GM12878 (cell line): ENCODE measurements at regions of chr2 and their contacts with region 1.

Region 1: GRCh38 chr2:152466980-152467676 is 132.2 kb downstream of the FMNL2 start:
- DNase-seq: peak; percentile 74
- ATAC-seq: peak; percentile 95
- H3K4me3 ChIP-seq: peak overlapping the region; percentile 33; the same call in 1 of the 2 replicates
- H3K27ac ChIP-seq: peak overlapping the region; percentile 62
- H3K4me1 ChIP-seq: peaks cover 23% of the 10 kb centered on the region
- H3K27me3 ChIP-seq: no peaks in the 10 kb centered on the region
- CTCF ChIP-seq: no peak
- EP300 ChIP-seq: peak in 1 of 2 experiments; percentile 91; a peak in 2 of 4 replicates
- POLR2A ChIP-seq: no peak
- RAD21 ChIP-seq: no peak

Region 2: GRCh38 chr2:152189622-152190495 is 277.3 kb before region 1 on chr2:
- CTCF ChIA-PET with region 1: interaction called, 10 read pairs
- POLR2A ChIA-PET with region 1: no interaction called
- RAD21 ChIA-PET with region 1: interaction called, 3 read pairs
- SMC1A ChIA-PET with region 1: interaction called, 5 read pairs
- in situ Hi-C with region 1: no loop called
- intact Hi-C with region 1: loop called (anchors 5 kb)
- DNase-seq: no peak
- ATAC-seq: peak; percentile 94
- H3K4me3 ChIP-seq: no peak overlapping the region
- H3K27ac ChIP-seq: no peak overlapping the region
- H3K4me1 ChIP-seq: no peaks in the 10 kb centered on the region
- H3K27me3 ChIP-seq: no peaks in the 10 kb centered on the region
- CTCF ChIP-seq: peak; percentile 71 to 79 (median 73)
- EP300 ChIP-seq: no peak
- POLR2A ChIP-seq: no peak
- RAD21 ChIP-seq: peak; percentile 97

Region 3: DNA sequence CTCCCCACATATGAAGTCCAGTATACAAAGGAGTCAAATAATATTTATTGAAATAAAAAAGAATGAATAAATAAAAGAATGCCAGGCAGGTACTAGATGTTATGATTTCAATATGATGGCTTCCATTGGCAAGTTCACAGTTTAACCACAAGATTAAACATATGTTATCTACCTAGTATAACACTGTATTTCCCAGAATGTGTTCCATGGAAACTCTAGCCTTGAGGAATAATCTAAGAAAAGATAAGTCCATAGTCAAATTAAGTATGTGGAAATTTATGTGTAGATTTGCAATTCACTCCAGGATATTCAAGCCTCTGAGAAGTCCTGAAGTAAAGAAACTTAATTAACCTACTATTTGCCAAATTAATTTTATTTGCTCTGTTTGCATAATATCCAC is 203.2 kb before region 1 on chr2:
- CTCF ChIA-PET with region 1: no interaction called
- POLR2A ChIA-PET with region 1: no interaction called
- RAD21 ChIA-PET with region 1: no interaction called
- SMC1A ChIA-PET with region 1: no interaction called
- in situ Hi-C with region 1: no loop called
- intact Hi-C with region 1: no loop called
- DNase-seq: no peak
- ATAC-seq: no peak
- H3K4me3 ChIP-seq: no peak overlapping the region
- H3K27ac ChIP-seq: no peak overlapping the region
- H3K4me1 ChIP-seq: no peaks in the 10 kb centered on the region
- H3K27me3 ChIP-seq: no peaks in the 10 kb centered on the region; a peak in 1 of 4 replicates
- CTCF ChIP-seq: no peak
- EP300 ChIP-seq: no peak
- POLR2A ChIP-seq: no peak
- RAD21 ChIP-seq: no peak

Region 4: GRCh38 chr2:152278526-152278925 is 188.6 kb before region 1 on chr2:
- CTCF ChIA-PET with region 1: no interaction called
- POLR2A ChIA-PET with region 1: no interaction called
- RAD21 ChIA-PET with region 1: no interaction called
- SMC1A ChIA-PET with region 1: no interaction called
- in situ Hi-C with region 1: no loop called
- intact Hi-C with region 1: no loop called
- DNase-seq: no peak
- ATAC-seq: no peak
- H3K4me3 ChIP-seq: no peak overlapping the region
- H3K27ac ChIP-seq: no peak overlapping the region
- H3K4me1 ChIP-seq: no peaks in the 10 kb centered on the region
- H3K27me3 ChIP-seq: no peaks in the 10 kb centered on the region; a peak in 1 of 4 replicates
- CTCF ChIP-seq: no peak
- EP300 ChIP-seq: no peak
- POLR2A ChIP-seq: no peak
- RAD21 ChIP-seq: no peak

Region 5: DNA sequence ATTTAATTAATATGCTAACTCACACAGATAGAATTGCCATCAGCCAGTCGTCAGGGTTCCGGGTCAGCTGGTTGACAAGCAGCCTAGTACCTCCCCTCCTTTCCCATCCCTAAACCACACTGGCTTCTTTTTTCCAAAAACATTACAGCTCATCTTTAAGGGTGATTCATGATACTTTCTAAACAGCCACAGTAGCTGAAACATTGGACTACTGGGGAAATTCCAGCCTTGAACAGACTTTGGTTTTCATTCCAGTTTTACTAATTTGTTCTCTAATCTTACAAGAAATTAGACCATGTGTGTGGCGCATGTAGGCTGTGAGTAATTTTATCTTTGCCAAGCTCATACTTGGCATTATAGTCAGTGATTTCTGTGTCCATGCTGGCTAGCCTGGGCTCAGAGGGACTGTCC is 21.3 kb before region 1 on chr2:
- CTCF ChIA-PET with region 1: interaction called, 4 read pairs
- POLR2A ChIA-PET with region 1: interaction called, 7 read pairs
- RAD21 ChIA-PET with region 1: interaction called, 17 read pairs
- SMC1A ChIA-PET with region 1: interaction called, 21 read pairs
- in situ Hi-C with region 1: no loop called
- intact Hi-C with region 1: no loop called
- DNase-seq: no peak
- ATAC-seq: peak; percentile 86
- H3K4me3 ChIP-seq: no peak overlapping the region
- H3K27ac ChIP-seq: peak overlapping the region; percentile 33
- H3K4me1 ChIP-seq: no peaks in the 10 kb centered on the region; the same call in 1 of the 2 replicates
- H3K27me3 ChIP-seq: no peaks in the 10 kb centered on the region
- CTCF ChIP-seq: no peak
- EP300 ChIP-seq: no peak
- POLR2A ChIP-seq: no peak
- RAD21 ChIP-seq: no peak

Region 6: GRCh38 chr2:152497481-152498052 is 30.4 kb after region 1 on chr2:
- CTCF ChIA-PET with region 1: interaction called, 3 read pairs
- POLR2A ChIA-PET with region 1: interaction called, 3 read pairs
- RAD21 ChIA-PET with region 1: interaction called, 7 read pairs
- SMC1A ChIA-PET with region 1: interaction called, 98 read pairs
- in situ Hi-C with region 1: no loop called
- intact Hi-C with region 1: no loop called
- DNase-seq: no peak
- ATAC-seq: peak; percentile 76
- H3K4me3 ChIP-seq: 0 out of 2 replicates have a peak overlapping the region, but pooled peaks have one; percentile 20
- H3K27ac ChIP-seq: no peak overlapping the region
- H3K4me1 ChIP-seq: peaks cover 24% of the 10 kb centered on the region
- H3K27me3 ChIP-seq: no peaks in the 10 kb centered on the region
- CTCF ChIP-seq: no peak
- EP300 ChIP-seq: 0 out of 4 replicates have a peak, but pooled peaks of 1 of the 2 experiments have one; percentile 39
- POLR2A ChIP-seq: no peak
- RAD21 ChIP-seq: no peak

Region 7: GRCh38 chr2:152566728-152567069 is 99.6 kb after region 1 on chr2:
- CTCF ChIA-PET with region 1: interaction called, 6 read pairs
- POLR2A ChIA-PET with region 1: no interaction called
- RAD21 ChIA-PET with region 1: interaction called, 13 read pairs
- SMC1A ChIA-PET with region 1: interaction called, 12 read pairs
- in situ Hi-C with region 1: no loop called
- intact Hi-C with region 1: no loop called
- DNase-seq: peak; percentile 64
- ATAC-seq: peak; percentile 54
- H3K4me3 ChIP-seq: no peak overlapping the region
- H3K27ac ChIP-seq: peak overlapping the region; percentile 65
- H3K4me1 ChIP-seq: peaks cover 28% of the 10 kb centered on the region
- H3K27me3 ChIP-seq: no peaks in the 10 kb centered on the region
- CTCF ChIP-seq: no peak
- EP300 ChIP-seq: 0 out of 4 replicates have a peak, but pooled peaks of 1 of the 2 experiments have one; percentile 45
- POLR2A ChIP-seq: no peak
- RAD21 ChIP-seq: no peak